Ovary (tissue), 10 donors: ENCODE measurements at regions of chr20 and their contacts with region 1.

Region 1: GRCh38 chr20:63009045-63009961 is 2.5 kb upstream of the BHLHE23 start:
- DNase-seq: peak; percentile 57 to 87 (median 77)
- H3K4me3 ChIP-seq: no peak overlapping the region
- H3K27ac ChIP-seq: no peak overlapping the region
- H3K4me1 ChIP-seq: peaks cover 1% of the 10 kb centered on the region
- H3K27me3 ChIP-seq: peaks cover 6% of the 10 kb centered on the region
- CTCF ChIP-seq: peak; percentile 86 to 93 (median 91)
- EP300 ChIP-seq: no peak
- POLR2A ChIP-seq: no peak

Region 2: GRCh38 chr20:62668441-62669027 is 340.8 kb before region 1 on chr20:
- intact Hi-C with region 1: loop called in 2 of 4 experiments (anchors 5 kb)
- DNase-seq: peak; percentile 60 to 83 (median 78)
- H3K4me3 ChIP-seq: no peak overlapping the region
- H3K27ac ChIP-seq: no peak overlapping the region
- H3K4me1 ChIP-seq: no peaks in the 10 kb centered on the region
- H3K27me3 ChIP-seq: no peaks in the 10 kb centered on the region
- CTCF ChIP-seq: peak; percentile 55 to 79 (median 78)
- EP300 ChIP-seq: no peak
- POLR2A ChIP-seq: no peak

Region 3: DNA sequence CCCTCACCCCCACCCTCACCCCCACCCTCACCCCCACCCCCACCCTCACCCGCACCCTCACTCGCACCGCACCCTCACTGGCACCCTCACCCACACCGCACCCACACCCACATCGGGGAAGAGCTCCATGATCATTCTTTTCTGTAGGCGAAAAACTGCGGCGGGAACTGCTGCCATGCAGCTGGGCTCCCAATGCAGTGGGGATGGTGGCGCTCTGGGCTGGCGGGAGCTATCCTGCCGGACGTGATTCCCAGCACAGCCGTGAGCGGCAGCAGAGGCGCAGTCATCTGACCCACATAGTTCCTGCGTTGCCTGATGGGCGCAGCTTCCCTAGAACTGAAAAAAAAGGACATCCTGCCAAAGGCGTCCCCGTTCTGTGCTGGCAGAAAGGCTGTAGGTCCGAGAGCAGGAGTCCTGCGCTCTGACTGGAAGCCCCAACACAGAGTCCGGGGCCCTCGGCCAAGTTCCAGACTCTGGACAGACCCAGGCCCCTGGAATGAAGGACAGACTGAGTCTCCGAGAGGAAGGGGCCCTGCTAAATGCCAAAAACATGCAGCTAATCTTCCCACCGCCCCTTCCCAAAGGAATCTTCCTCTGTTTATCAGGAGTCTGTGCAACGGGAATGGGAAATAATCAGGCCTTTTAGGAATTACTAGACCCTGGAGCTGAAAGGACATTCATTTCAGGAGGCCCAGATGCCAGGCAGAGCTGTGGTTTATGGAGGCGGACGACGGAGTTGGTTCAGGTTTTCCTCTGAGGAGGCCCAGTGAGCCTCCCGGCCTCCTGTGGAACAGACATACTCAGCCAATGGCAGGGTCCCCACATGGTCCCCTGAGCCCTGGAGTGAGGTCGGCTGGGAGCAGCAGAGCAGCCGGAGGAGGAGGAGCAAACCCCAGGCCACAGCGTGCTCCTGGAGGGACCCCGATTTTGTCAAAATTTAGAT is 133.6 kb before region 1 on chr20:
- intact Hi-C with region 1: loop called in 2 of 4 experiments (anchors 10 kb)
- DNase-seq: peak; percentile 61 to 83 (median 69)
- H3K4me3 ChIP-seq: no peak overlapping the region
- H3K27ac ChIP-seq: no peak overlapping the region
- H3K4me1 ChIP-seq: peaks cover 13% of the 10 kb centered on the region
- H3K27me3 ChIP-seq: no peaks in the 10 kb centered on the region
- CTCF ChIP-seq: peak in 2 of 3 donors; percentile 41 to 64
- EP300 ChIP-seq: no peak
- POLR2A ChIP-seq: no peak

Region 4: DNA sequence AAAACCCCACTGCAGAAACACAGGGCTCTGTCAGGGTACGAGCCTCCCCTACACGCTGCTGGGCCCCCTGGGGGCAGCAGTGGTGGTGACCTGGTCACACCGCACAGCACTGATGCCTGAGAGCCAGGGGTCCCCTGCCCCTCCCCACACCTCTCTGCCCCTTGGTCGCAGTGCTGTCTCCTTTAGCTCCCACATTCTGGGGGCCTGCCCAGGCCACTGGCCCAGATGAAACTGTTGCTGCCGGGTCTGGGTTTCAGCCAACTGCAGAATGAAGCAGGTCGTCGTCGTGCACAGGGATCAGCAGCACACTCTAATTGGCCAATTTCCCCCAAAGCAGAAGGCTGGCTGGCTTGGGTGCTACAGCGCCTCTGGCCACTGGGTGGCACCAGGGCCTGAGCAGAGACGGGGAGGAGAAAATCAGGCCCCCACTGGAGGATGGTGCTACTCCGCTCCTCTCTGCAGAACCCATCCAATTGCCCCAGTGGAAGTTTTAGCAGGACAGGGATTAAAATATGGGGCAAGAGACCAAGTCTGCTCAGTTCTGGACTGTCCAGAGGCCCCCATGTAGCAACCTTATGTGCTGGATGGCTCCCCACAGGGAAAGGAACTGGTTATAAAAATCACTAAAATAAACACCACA is 109.1 kb before region 1 on chr20:
- intact Hi-C with region 1: loop called (anchors 2 to 10 kb)
- DNase-seq: peak; percentile 77 to 85 (median 82)
- H3K4me3 ChIP-seq: no peak overlapping the region
- H3K27ac ChIP-seq: no peak overlapping the region
- H3K4me1 ChIP-seq: peaks cover 3% of the 10 kb centered on the region
- H3K27me3 ChIP-seq: no peaks in the 10 kb centered on the region
- CTCF ChIP-seq: peak; percentile 65 to 91 (median 82)
- EP300 ChIP-seq: no peak
- POLR2A ChIP-seq: no peak

Region 5: GRCh38 chr20:62972270-62973032 is 36.9 kb before region 1 on chr20:
- intact Hi-C with region 1: loop called in 2 of 4 experiments (anchors 2 kb)
- DNase-seq: peak; percentile 81 to 90 (median 84)
- H3K4me3 ChIP-seq: no peak overlapping the region
- H3K27ac ChIP-seq: no peak overlapping the region
- H3K4me1 ChIP-seq: peaks cover 5% of the 10 kb centered on the region
- H3K27me3 ChIP-seq: no peaks in the 10 kb centered on the region
- CTCF ChIP-seq: peak; percentile 78 to 87 (median 81)
- EP300 ChIP-seq: no peak
- POLR2A ChIP-seq: no peak